Activated CD4-positive, alpha-beta memory T cell treated with anti-CD3 and anti-CD28 coated beads, Interleukin-2, amount 10 ng/mL, durations not matched to agents 7 days and 5 days (primary cell): ENCODE measurements at regions of chr18 and their contacts with region 1.

Region 1: GRCh38 chr18:32040936-32041335 is 22.3 kb downstream of the RNF125 start:
- DNase-seq: peak; percentile 79
- H3K4me3 Mint-ChIP-seq: peak overlapping the region; percentile 55
- H3K27ac Mint-ChIP-seq: peak overlapping the region; percentile 96
- H3K4me1 Mint-ChIP-seq: peaks cover 67% of the 10 kb centered on the region
- H3K27me3 Mint-ChIP-seq: no peaks in the 10 kb centered on the region

Region 2: GRCh38 chr18:31931163-31931885 is 109.6 kb before region 1 on chr18:
- CTCF ChIA-PET with region 1: no interaction called
- POLR2A ChIA-PET with region 1: no interaction called
- DNase-seq: no peak
- H3K4me3 Mint-ChIP-seq: no peak overlapping the region
- H3K27ac Mint-ChIP-seq: no peak overlapping the region
- H3K4me1 Mint-ChIP-seq: peaks cover 4% of the 10 kb centered on the region
- H3K27me3 Mint-ChIP-seq: no peaks in the 10 kb centered on the region

Region 3: DNA sequence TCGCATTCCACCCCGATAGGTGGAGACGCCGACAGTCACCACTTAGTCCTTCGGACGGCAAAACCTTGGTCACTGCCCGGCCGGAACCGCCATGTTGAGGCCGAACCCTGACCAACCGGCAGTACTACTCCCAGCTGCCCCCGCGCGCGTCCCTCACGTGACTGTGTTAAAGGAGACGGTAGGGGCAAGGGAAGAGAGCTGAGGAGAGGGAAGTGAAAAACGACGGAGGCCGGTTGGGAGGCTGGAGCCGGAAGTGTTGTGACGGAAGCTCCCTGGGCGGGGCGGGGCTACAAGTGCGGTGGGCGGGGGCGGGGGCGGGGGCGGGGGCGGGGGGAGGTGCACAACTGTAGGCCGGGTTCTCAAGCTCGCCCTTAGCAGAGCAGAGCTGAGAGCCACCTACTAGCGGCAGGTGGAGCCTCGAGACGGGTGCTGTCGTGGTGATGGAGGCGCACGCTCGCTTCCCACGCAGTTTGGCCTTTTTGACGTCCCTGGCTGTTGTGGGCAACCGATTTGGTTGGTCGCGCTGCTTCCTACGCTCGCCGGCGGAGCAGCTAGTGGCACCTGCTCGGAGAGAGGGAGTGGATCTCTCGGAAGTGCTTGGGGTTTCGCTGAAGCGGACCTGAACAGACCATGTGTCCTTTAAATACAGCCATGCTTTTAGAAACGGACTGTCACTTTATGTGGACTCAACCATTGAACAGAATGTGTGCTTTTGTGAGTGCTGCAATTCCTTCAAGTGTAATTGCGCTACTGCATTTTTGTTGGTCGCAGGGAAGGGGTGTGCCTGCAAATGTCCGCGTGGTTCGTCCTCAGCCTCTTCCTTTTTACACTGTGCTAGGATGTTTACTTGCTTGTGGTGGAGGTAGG is 97.7 kb before region 1 on chr18 and contains the start of gene TRAPPC8:
- CTCF ChIA-PET with region 1: interaction called, 13 read pairs
- POLR2A ChIA-PET with region 1: interaction called, 9 read pairs
- DNase-seq: peak; percentile 94
- H3K4me3 Mint-ChIP-seq: peak within 1 kb of the TSS; percentile 100
- H3K27ac Mint-ChIP-seq: peak within 1 kb of the TSS; percentile 98
- H3K4me1 Mint-ChIP-seq: peaks cover 51% of the 10 kb centered on the region
- H3K27me3 Mint-ChIP-seq: no peaks in the 10 kb centered on the region
- total RNA-seq, gene TRAPPC8: 40.1 to 42.7 TPM

Region 4: DNA sequence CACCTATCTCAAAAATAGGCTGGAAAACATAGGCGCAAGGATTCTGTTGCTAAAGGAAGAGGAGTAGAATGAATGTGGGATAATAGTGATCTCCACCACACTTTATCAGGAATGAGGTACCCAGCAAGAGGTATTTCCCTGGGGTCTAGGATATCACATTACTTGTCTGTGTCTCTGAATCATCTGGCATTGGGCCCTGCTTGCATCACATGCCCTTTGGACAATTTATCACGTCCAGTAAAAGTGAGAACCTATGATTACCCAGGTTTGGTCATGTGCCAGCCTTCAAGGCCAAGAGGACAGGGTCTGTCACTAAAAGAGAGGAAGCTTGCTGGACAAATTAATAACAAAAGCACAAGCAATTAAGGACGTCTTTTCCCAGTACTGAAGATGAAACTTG is 86.6 kb before region 1 on chr18:
- CTCF ChIA-PET with region 1: no interaction called
- POLR2A ChIA-PET with region 1: no interaction called
- DNase-seq: no peak
- H3K4me3 Mint-ChIP-seq: no peak overlapping the region
- H3K27ac Mint-ChIP-seq: no peak overlapping the region
- H3K4me1 Mint-ChIP-seq: peaks cover 1% of the 10 kb centered on the region
- H3K27me3 Mint-ChIP-seq: peaks cover 3% of the 10 kb centered on the region

Region 5: DNA sequence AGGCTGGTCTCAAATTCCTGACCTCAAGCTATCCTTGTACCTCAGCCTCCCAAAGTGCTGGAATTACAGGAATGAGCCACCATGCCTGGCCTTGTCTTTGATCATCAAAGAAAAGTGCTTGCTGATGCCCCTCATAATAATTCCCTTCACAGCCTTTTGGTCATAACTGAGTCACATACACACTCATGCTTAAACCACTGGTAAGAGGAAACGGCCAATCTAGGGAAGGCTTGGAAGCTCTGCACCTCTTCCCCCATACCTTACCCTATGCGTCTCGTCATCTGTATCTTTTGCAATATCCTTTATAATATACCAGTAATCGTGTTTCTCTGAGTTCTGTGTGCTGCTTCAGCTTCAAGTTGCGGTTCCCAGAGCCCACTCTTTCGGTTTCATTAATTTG is 45.9 kb after region 1 on chr18:
- CTCF ChIA-PET with region 1: interaction called, 11 read pairs
- POLR2A ChIA-PET with region 1: interaction called, 31 read pairs
- DNase-seq: no peak
- H3K4me3 Mint-ChIP-seq: no peak overlapping the region
- H3K27ac Mint-ChIP-seq: peak overlapping the region; percentile 5
- H3K4me1 Mint-ChIP-seq: peaks cover 43% of the 10 kb centered on the region
- H3K27me3 Mint-ChIP-seq: peaks cover 2% of the 10 kb centered on the region

Region 6: GRCh38 chr18:32287249-32287648 is 246.3 kb after region 1 on chr18:
- CTCF ChIA-PET with region 1: no interaction called
- POLR2A ChIA-PET with region 1: no interaction called
- DNase-seq: no peak
- H3K4me3 Mint-ChIP-seq: no peak overlapping the region
- H3K27ac Mint-ChIP-seq: no peak overlapping the region
- H3K4me1 Mint-ChIP-seq: no peaks in the 10 kb centered on the region
- H3K27me3 Mint-ChIP-seq: no peaks in the 10 kb centered on the region